Activated CD8-positive, alpha-beta T cell treated with anti-CD3 and anti-CD28 coated beads, Interleukin-2, amount 10 ng/mL, durations not matched to agents 7 days and 5 days (primary cell): ENCODE measurements at regions of chr10 and their contacts with region 1.

Region 1: GRCh38 chr10:62183442-62183841 is 85.2 kb downstream of the RTKN2 start:
- DNase-seq: peak; percentile 71
- ATAC-seq: peak; percentile 83
- H3K4me3 Mint-ChIP-seq: peak overlapping the region; percentile 50
- H3K27ac Mint-ChIP-seq: peak overlapping the region; percentile 87
- H3K4me1 Mint-ChIP-seq: peaks cover 82% of the 10 kb centered on the region
- H3K27me3 Mint-ChIP-seq: no peaks in the 10 kb centered on the region

Region 2: DNA sequence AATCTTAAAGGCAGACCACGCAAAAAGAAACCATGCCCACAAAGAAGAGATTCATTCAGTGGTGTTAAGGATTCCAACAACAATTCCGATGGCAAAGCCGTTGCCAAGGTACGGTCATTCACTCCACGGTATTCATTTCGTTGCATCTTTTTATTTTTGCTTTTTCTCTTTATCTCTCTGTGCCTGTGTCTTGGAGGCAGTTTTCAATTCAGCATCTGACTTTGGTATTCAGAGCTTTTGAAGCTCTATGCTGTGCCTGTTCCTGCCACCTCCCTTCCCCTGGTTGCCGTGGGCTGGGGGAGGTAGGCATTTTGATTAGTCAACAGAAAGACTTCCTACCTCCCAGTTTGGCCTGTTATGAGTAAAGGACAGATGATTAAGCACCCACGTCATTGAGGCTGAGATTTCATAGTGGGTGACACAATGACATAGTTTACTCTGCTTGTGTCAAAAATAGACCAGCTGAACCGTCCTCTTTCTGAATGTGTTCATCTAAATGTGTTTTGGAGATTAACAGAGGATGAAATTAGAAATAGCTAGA is 132.5 kb before region 1 on chr10:
- CTCF ChIA-PET with region 1: interaction called, 8 read pairs
- POLR2A ChIA-PET with region 1: interaction called, 39 read pairs
- DNase-seq: peak; percentile 75
- ATAC-seq: peak; percentile 47
- H3K4me3 Mint-ChIP-seq: peak overlapping the region; percentile 77
- H3K27ac Mint-ChIP-seq: peak overlapping the region; percentile 95
- H3K4me1 Mint-ChIP-seq: peaks cover 99% of the 10 kb centered on the region
- H3K27me3 Mint-ChIP-seq: no peaks in the 10 kb centered on the region

Region 3: GRCh38 chr10:62082729-62083411 is 100.6 kb before region 1 on chr10:
- CTCF ChIA-PET with region 1: interaction called, 4 read pairs
- POLR2A ChIA-PET with region 1: interaction called, 18 read pairs
- DNase-seq: peak; percentile 74
- ATAC-seq: peak; percentile 78
- H3K4me3 Mint-ChIP-seq: peak overlapping the region; percentile 66
- H3K27ac Mint-ChIP-seq: peak overlapping the region; percentile 92
- H3K4me1 Mint-ChIP-seq: peaks cover 68% of the 10 kb centered on the region
- H3K27me3 Mint-ChIP-seq: no peaks in the 10 kb centered on the region

Region 4: GRCh38 chr10:62153191-62153590 is 30.3 kb before region 1 on chr10:
- CTCF ChIA-PET with region 1: no interaction called
- POLR2A ChIA-PET with region 1: no interaction called
- DNase-seq: no peak
- ATAC-seq: no peak
- H3K4me3 Mint-ChIP-seq: no peak overlapping the region
- H3K27ac Mint-ChIP-seq: no peak overlapping the region
- H3K4me1 Mint-ChIP-seq: peaks cover 7% of the 10 kb centered on the region
- H3K27me3 Mint-ChIP-seq: no peaks in the 10 kb centered on the region

Region 5: GRCh38 chr10:62199584-62199983 is 16.1 kb after region 1 on chr10:
- CTCF ChIA-PET with region 1: interaction called, 12 read pairs
- POLR2A ChIA-PET with region 1: interaction called, 8 read pairs
- DNase-seq: no peak
- ATAC-seq: peak; percentile 98
- H3K4me3 Mint-ChIP-seq: no peak overlapping the region
- H3K27ac Mint-ChIP-seq: peak overlapping the region; percentile 37
- H3K4me1 Mint-ChIP-seq: peaks cover 28% of the 10 kb centered on the region
- H3K27me3 Mint-ChIP-seq: no peaks in the 10 kb centered on the region